ENCODE measurements at regions of chr3 and their contacts with region 1.

Region 1: GRCh38 chr3:87272718-87273341 is 3.6 kb downstream of the POU1F1 start:
- DNase-seq: no peak
- H3K4me3 Mint-ChIP-seq: no peak overlapping the region
- H3K27ac Mint-ChIP-seq: no peak overlapping the region
- H3K4me1 Mint-ChIP-seq: peaks cover 43% of the 10 kb centered on the region
- H3K27me3 Mint-ChIP-seq: peaks cover 3% of the 10 kb centered on the region

Region 2: DNA sequence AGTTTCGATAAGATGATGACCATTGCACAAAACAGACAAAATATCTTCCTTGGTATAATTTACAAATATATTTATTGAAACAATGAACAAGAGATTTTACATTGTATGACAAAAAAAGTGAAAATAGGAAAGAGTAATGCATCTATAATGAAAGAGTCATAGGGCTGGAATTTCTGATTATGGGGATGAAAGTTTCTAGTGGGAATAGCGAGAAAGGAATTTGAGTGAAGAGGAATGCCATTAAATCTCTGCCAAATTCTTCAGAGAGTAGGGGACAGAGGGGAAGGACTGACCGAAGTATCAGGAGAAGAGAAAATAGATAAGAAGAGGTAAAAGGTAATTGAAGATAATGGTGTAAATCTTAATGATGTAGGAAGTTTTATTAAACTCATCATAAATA is 407.3 kb before region 1 on chr3:
- intact Hi-C with region 1: no loop called
- DNase-seq: no peak
- H3K4me3 Mint-ChIP-seq: no peak overlapping the region
- H3K27ac Mint-ChIP-seq: no peak overlapping the region
- H3K4me1 Mint-ChIP-seq: no peaks in the 10 kb centered on the region
- H3K27me3 Mint-ChIP-seq: no peaks in the 10 kb centered on the region

Region 3: DNA sequence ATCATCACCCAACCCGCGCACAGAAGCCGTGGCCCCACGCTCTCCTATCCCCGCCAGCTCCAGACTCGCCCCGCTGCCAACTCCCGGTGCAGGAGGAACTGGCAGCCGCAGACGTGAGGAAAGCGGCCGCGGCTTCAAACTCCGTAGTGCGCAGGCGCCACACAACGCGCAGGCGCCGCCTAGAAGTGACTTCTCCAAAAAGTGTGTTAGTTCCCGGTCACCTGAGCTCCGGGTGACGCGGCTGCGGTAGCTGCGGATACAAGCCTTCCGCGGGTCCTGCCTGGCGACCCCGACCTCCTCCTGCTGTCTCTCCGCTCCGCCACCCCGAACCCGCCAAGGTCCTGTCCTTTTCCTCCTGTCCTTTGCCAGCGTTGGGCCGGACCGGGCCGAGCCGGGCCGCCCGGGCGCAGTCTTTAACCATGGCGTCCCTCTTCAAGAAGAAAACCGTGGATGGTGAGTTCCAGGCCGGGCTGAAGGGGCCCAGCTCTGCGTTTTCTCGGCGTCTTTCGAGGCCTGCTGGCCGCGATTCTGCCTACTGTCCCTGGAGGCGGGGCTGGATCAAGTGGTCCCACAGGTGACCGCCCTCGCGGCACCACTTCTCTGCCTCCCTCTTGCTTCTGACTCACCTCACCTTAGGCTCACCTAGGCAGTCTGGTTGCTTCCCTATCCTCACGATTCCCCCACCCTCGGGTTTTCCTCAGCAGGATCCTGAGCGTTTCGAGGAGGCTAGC is 45.6 kb before region 1 on chr3 and contains the start of gene CHMP2B:
- intact Hi-C with region 1: loop called (anchors 5 kb)
- DNase-seq: peak; percentile 88
- H3K4me3 Mint-ChIP-seq: peak within 1 kb of the TSS; percentile 100
- H3K27ac Mint-ChIP-seq: peak within 1 kb of the TSS; percentile 96
- H3K4me1 Mint-ChIP-seq: peaks cover 22% of the 10 kb centered on the region
- H3K27me3 Mint-ChIP-seq: peaks cover 15% of the 10 kb centered on the region
- total RNA-seq, gene CHMP2B: 25.0 and 25.2 TPM in 2 replicates

Region 4: GRCh38 chr3:87287011-87287410 is 14.2 kb after region 1 on chr3:
- intact Hi-C with region 1: loop called (anchors 1 kb)
- DNase-seq: no peak
- H3K4me3 Mint-ChIP-seq: no peak overlapping the region
- H3K27ac Mint-ChIP-seq: peak overlapping the region; percentile 43
- H3K4me1 Mint-ChIP-seq: peaks cover 7% of the 10 kb centered on the region
- H3K27me3 Mint-ChIP-seq: peaks cover 15% of the 10 kb centered on the region

Region 5: GRCh38 chr3:87997298-87997697 is 724.5 kb after region 1 on chr3:
- intact Hi-C with region 1: loop called (anchors 10 kb)
- DNase-seq: peak; percentile 48
- H3K4me3 Mint-ChIP-seq: no peak overlapping the region
- H3K27ac Mint-ChIP-seq: peak overlapping the region; percentile 70
- H3K4me1 Mint-ChIP-seq: peaks cover 31% of the 10 kb centered on the region
- H3K27me3 Mint-ChIP-seq: peaks cover 13% of the 10 kb centered on the region

Measured in activated T-helper 2 cell treated with anti-CD3 and anti-CD28 coated beads, Interferon-gamma antibody, Interleukin-2, Interleukin-4, amounts not matched to agents 10 μg/mL and 5 μg/mL and 100 μg/mL, durations not matched to agents 14 hours and 24 hours and 36 hours (primary cell).